ENCODE measurements at regions of chr3 and their contacts with region 1.

Region 1: DNA sequence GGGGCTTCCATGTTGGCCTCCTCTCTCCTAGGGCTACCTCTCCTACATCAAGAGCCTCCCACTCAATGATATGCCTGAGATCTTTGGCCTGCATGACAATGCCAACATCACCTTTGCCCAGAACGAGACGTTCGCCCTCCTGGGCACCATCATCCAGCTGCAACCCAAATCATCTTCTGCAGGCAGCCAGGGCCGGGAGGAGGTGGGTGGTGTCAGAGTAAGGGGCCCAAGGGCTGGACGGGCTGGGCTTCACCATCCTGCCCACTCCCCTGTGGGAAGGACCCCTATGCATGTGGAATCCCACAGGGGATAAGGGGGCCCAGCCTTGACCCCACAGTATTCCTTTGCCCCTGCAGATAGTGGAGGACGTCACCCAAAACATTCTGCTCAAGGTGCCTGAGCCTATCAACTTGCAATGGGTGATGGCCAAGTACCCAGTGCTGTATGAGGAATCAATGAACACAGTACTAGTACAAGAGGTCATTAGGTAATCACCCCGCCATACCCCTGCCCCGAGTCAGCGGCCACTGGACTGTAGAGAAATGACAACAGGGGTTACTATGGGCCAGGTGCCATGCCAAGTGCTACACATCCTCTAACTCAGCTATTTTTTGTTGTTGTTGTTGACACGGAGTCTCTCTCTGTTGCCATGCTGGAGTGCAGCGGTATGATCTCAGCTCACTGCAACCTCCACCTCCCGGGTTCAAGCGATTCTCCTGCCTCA is 47.1 kb downstream of the SEMA3G start:
- DNase-seq: no peak
- H3K4me3 ChIP-seq: no peak overlapping the region
- H3K4me3 Mint-ChIP-seq: no peak overlapping the region
- H3K27ac Mint-ChIP-seq: no peak overlapping the region
- H3K4me1 ChIP-seq: no peaks in the 10 kb centered on the region
- H3K4me1 Mint-ChIP-seq: no peaks in the 10 kb centered on the region
- H3K27me3 ChIP-seq: no peaks in the 10 kb centered on the region
- H3K27me3 Mint-ChIP-seq: no peaks in the 10 kb centered on the region
- CTCF ChIP-seq: no peak

Region 2: DNA sequence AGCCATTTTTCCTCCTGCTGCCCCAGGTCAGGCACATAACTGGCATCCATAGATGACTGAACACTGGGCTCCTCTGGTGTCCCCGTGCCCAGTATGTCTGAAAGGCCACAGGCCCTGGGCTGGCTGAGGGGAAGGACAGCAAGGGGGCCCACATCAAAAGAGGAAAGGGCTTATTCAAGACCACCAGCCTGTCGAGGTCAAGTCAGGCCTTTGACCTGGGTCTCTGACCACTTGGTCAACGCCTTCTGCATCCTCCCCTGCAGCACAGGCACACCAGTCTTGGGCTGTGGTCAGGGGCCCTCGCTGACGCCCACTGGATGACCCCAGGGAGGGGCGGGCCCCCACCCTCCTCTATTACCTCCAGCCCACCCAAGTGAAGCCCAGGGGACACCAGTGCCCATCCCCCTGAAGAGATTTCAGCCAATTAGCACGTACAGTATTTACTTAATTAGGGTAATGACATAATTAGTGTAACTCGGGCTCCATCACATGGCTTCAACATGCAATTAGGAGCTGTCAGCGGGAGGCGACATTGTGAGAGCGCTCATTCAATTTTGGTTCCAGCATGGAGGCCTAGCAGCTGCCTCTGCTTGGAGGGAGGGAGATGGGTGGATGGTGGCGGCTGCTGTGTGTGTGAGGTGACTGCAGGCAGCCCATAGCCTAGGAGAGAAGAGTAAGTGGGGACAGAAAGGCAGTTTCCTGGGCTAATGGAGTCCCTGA is 95.3 kb before region 1 on chr3:
- CTCF ChIA-PET with region 1: no interaction called
- POLR2A ChIA-PET with region 1: no interaction called
- intact Hi-C with region 1: no loop called
- DNase-seq: no peak
- H3K4me3 ChIP-seq: no peak overlapping the region
- H3K4me3 Mint-ChIP-seq: no peak overlapping the region
- H3K27ac Mint-ChIP-seq: no peak overlapping the region
- H3K4me1 ChIP-seq: peaks cover 48% of the 10 kb centered on the region
- H3K4me1 Mint-ChIP-seq: peaks cover 38% of the 10 kb centered on the region
- H3K27me3 ChIP-seq: no peaks in the 10 kb centered on the region
- H3K27me3 Mint-ChIP-seq: no peaks in the 10 kb centered on the region
- CTCF ChIP-seq: no peak

Region 3: DNA sequence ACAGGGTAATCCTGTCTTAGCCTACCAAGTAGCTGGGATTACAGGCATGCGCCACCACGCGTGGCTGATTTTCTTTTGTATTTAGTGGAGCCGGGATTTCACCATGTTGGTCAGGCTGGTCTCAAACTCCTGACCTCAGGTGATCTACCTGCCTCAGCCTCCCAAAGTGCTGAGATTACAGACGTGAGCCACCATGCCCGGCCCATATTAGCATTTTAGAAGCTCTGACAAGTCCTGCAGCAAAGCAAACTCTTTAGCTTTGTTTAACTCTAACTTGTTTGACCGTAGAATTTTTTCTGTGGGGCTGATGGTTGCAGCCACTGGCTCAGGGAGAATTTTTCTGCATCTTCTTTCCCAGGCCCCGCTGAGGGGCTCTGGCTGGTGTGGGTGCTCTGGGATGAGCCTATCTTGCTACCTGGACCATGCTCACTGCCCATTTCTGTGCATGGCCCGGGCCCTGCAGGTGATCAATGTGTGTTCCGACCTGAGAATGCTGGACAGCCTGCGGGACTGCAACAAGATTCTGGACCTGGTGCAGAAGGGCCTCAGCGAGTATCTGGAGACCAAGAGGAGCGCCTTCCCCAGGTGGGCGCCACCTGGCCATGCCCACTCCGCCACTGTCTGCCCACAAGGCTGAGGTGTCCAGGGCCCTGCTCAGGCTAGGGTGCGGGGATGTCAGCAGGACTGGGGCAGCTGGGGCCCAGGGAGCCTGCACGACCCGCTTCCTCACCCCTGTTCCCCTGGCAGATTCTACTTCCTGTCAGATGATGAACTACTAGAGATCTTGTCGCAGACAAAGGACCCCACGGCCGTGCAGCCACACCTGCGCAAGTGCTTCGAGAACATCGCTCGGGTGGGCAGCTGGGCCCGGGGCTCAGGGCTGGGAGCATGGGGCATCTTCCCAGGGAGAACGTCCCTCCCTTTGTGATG is 40.4 kb before region 1 on chr3:
- CTCF ChIA-PET with region 1: no interaction called
- POLR2A ChIA-PET with region 1: interaction called, 14 read pairs
- intact Hi-C with region 1: no loop called
- DNase-seq: no peak
- H3K4me3 ChIP-seq: no peak overlapping the region
- H3K4me3 Mint-ChIP-seq: no peak overlapping the region
- H3K27ac Mint-ChIP-seq: no peak overlapping the region
- H3K4me1 ChIP-seq: no peaks in the 10 kb centered on the region
- H3K4me1 Mint-ChIP-seq: no peaks in the 10 kb centered on the region
- H3K27me3 ChIP-seq: no peaks in the 10 kb centered on the region
- H3K27me3 Mint-ChIP-seq: no peaks in the 10 kb centered on the region
- CTCF ChIP-seq: no peak

Region 4: DNA sequence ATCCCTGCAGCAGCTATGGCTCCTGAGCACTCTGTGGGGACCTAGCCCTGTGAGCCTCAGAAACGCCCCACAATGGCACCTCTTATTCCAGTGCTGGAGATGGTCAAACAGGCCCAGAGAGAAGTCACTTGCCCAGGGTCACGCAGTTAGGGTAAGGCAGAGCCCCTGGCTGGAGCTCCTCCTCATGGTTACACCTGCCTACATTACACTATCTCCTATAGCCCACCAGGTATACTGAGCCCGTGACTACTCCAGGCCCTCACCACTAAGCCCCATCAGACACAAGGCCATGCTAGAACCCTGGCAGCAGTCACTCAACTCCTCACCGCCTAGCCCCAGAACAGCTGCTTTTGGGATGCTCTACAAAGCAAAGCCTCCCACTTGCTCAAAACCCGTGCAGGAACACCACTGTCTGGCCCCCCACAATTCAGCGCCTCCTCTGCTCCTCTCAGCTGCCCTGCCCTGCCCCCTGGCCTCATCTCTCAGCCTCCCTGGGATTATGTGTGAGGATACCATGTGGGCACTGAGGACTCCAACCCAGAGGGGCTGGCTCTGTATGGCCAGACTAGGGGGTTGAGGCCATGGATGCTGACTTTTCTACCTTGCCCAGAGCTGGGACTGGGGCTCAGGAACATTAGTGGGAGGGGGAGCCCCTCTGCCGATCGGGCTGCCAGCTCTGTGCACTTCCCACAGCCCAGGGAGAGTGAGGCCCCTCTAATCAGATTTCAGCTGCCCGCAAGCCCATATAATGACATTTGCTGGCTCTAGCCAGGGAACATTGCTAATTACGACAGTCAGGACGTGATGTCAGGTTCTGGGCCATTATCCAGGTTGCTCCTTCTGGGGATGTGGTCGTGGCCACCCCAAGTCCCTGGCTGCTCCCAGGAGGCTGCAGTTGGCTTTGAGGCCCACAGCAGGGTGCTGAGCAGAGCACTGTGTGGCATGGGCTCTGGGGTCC is 131.8 kb after region 1 on chr3:
- CTCF ChIA-PET with region 1: no interaction called
- POLR2A ChIA-PET with region 1: no interaction called
- intact Hi-C with region 1: no loop called
- DNase-seq: no peak
- H3K4me3 ChIP-seq: no peak overlapping the region
- H3K4me3 Mint-ChIP-seq: no peak overlapping the region
- H3K27ac Mint-ChIP-seq: peak overlapping the region; percentile 39
- H3K4me1 ChIP-seq: peaks cover 16% of the 10 kb centered on the region
- H3K4me1 Mint-ChIP-seq: peaks cover 4% of the 10 kb centered on the region
- H3K27me3 ChIP-seq: no peaks in the 10 kb centered on the region
- H3K27me3 Mint-ChIP-seq: no peaks in the 10 kb centered on the region
- CTCF ChIP-seq: no peak